Heart left ventricle (tissue), 16 donors: ENCODE measurements at regions of chr19 and their contacts with region 1.

Region 1: GRCh38 chr19:47790398-47790814 is 11.9 kb downstream of the SELENOW start:
- DNase-seq: peak; percentile 79 to 91 (median 85)
- ATAC-seq: peak; percentile 47 to 78 (median 68)
- H3K4me3 ChIP-seq: no peak overlapping the region
- H3K27ac ChIP-seq: no peak overlapping the region
- H3K4me1 ChIP-seq: peaks cover 0 to 12% (median 4%) of the 10 kb centered on the region in 12 donors
- H3K27me3 ChIP-seq: no peaks in the 10 kb centered on the region
- CTCF ChIP-seq: peak; percentile 68 to 83 (median 80)
- POLR2A ChIP-seq: no peak

Region 2: GRCh38 chr19:47765523-47766358 is 24.7 kb before region 1 on chr19:
- intact Hi-C with region 1: loop called (anchors 1 to 2 kb)
- DNase-seq: peak; percentile 67 to 87 (median 76)
- ATAC-seq: peak; percentile 69 to 75 (median 74)
- H3K4me3 ChIP-seq: no peak overlapping the region
- H3K27ac ChIP-seq: no peak overlapping the region
- H3K4me1 ChIP-seq: peaks cover 0 to 19% (median 3%) of the 10 kb centered on the region in 12 donors
- H3K27me3 ChIP-seq: no peaks in the 10 kb centered on the region
- CTCF ChIP-seq: peak; percentile 72 to 89 (median 82)
- POLR2A ChIP-seq: no peak

Region 3: GRCh38 chr19:47832723-47833122 is 42.3 kb after region 1 on chr19:
- intact Hi-C with region 1: no loop called
- DNase-seq: no peak
- ATAC-seq: no peak
- H3K4me3 ChIP-seq: no peak overlapping the region
- H3K27ac ChIP-seq: no peak overlapping the region
- H3K4me1 ChIP-seq: no peaks in the 10 kb centered on the region
- H3K27me3 ChIP-seq: peaks cover 0 to 7% (median 0%) of the 10 kb centered on the region in 9 donors
- CTCF ChIP-seq: no peak
- POLR2A ChIP-seq: no peak